ENCODE measurements at regions of chr12 and their contacts with region 1.

Region 1: GRCh38 chr12:123580772-123581171 is 3.6 kb upstream of the TMED2 start:
- DNase-seq: no peak

Region 2: DNA sequence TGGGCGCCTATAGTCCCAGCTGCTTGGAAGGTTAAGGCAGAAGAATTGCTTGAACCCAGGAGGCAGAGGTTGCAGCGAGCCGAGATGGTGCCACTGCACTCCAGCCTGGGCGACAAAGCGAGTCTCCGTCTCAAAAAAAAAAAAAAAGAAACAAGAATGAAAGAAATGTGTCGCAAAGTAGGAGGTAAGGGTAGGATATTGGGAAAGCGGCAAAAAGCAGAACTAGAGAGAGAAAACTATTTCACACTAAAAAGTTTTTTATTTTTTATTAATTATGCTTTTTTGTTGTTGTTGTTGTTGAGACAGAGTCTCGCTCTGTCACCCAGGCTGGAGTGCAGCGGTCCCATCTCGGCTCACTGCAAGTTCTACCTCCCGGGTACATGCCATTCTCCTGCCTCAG is 233.8 kb before region 1 on chr12:
- intact Hi-C with region 1: no loop called
- DNase-seq: no peak

Region 3: DNA sequence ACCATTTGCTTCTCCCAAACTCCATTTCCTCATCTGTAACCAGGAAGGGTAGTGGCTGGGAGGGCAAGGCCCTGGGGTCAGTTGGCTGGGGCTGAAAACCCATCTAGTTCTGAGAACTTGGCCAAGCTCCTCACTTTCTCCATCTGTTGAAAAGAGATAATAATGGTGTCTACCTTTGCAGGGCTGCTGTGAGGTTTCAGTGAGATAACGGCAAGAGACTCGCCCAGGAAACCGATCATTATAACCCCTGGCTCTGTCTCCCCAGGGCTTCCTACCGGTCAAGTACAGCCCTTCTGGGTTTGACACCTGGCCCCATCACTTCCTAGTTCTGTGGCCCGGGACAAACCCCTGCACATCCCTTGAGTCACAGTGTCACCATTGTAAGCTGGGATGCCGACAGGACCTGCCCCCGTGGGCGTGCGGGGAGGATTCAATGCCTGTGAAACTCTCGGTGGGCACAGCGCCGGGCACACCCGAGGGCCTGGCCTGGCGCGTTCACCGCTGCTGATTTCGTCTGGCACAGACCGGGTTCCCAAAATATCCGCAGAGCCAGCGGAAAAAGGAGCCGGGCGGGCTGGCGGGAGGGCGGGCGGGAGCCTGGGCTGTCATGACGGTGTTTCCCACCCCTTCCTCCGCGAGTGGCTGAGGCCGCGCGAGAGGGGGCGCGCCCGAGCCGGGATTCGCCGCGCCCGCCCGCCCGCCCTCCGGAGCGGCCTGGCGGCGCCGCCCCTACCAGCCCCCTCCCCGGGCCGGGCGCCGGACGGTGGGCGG is 192.4 kb before region 1 on chr12:
- intact Hi-C with region 1: loop called (anchors 5 kb)
- DNase-seq: peak; percentile 50 to 90 (median 82)

Region 4: GRCh38 chr12:123457980-123458783 is 122.6 kb before region 1 on chr12 and contains the start of gene SNRNP35:
- intact Hi-C with region 1: loop called (anchors 5 kb)
- DNase-seq: peak; percentile 64 to 92 (median 84)

Region 5: DNA sequence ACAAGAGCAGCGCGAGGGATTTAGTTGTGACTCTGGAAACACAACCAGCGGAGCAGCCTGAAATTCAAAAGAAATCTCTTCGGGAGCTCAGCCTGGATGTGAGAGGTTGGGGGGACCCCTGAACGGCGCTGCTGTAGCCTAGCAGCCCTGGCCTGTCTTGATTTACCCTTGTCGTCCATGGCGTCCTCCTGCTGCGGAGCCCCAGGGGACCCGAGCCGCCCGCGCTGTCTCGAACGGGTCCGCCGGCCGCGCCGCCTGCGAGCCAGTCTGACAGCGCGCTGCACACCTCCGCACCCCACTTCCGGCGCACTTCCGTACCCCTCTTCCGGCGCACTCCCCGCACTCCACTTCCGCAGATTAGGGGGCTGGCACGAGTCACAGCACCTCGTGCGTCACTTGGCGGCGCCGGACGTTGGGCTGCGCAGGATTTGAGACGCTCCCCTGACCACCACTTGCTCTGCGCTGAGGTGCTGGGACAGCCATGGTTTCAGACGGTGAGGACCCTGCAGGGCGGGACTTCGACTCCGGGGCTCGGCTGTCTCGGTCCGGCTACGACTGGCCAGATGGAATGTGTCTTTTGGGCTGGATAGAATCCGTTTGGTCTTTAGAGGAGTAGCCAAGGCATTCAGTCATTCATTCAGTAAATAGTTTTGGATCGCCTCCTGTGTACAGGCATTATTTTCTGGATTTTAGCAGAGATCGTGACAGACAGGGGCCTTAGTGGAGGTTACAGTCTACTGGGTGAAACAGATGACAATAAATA is 52.8 kb after region 1 on chr12 and contains the starts of genes EIF2B1 and GTF2H3:
- intact Hi-C with region 1: loop called (anchors 5 kb)
- DNase-seq: peak; percentile 89 to 99 (median 97)